CD14-positive monocyte (primary cell): ENCODE measurements at regions of chr4 and their contacts with region 1.

Region 1: DNA sequence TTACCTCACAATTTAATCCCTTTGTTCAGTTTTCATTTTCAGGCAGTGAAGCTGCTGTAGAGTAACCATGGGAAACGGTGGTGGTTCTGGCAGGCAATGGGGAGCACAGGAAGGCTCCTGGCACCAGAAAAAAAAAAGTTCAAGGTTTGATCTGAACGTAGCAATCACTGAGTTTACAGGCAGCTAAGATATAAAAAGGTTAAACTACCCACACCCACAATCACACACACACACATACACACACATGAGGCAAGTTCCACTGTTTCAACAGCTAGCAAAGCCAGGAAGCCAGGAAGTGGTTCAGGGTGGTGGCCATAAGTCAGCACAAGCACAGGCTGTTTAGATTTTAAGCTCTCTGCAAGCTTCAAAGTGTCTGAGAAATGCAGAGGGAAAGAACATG is at the start of gene SULT1B1:
- DNase-seq: peak; percentile 45 to 60 (median 54)
- H3K4me3 ChIP-seq: peak within 1 kb of the TSS; percentile 33 to 74 (median 68)
- H3K4me3 Mint-ChIP-seq: peak within 1 kb of the TSS; percentile 79 to 97
- H3K27ac ChIP-seq: peak within 1 kb of the TSS; percentile 79 to 87
- H3K27ac Mint-ChIP-seq: peak within 1 kb of the TSS; percentile 90 to 98 (median 96)
- H3K4me1 ChIP-seq: peaks cover 34 to 50% of the 10 kb centered on the region in 2 donors
- H3K4me1 Mint-ChIP-seq: peaks cover 53% of the 10 kb centered on the region
- H3K27me3 ChIP-seq: no peaks in the 10 kb centered on the region
- H3K27me3 Mint-ChIP-seq: no peaks in the 10 kb centered on the region
- CTCF ChIP-seq: no peak
- polyA plus RNA-seq, gene SULT1B1: 3.4 to 15.6 (median 11.2) TPM

Region 2: GRCh38 chr4:69823481-69824186 is 63.2 kb after region 1 on chr4:
- intact Hi-C with region 1: loop called in 1 of 2 experiments (anchors 10 kb)
- DNase-seq: peak; percentile 26 to 44 (median 36)
- H3K4me3 ChIP-seq: no peak overlapping the region
- H3K4me3 Mint-ChIP-seq: no peak overlapping the region
- H3K27ac ChIP-seq: no peak overlapping the region
- H3K27ac Mint-ChIP-seq: peak overlapping the region in 1 of 7 donors; percentile 1
- H3K4me1 ChIP-seq: peaks cover 0 to 4% of the 10 kb centered on the region in 2 donors
- H3K4me1 Mint-ChIP-seq: peaks cover 18% of the 10 kb centered on the region
- H3K27me3 ChIP-seq: no peaks in the 10 kb centered on the region
- H3K27me3 Mint-ChIP-seq: peaks cover 0 to 6% (median 2%) of the 10 kb centered on the region in 3 donors
- CTCF ChIP-seq: peak; percentile 67

Region 3: GRCh38 chr4:70704331-70705145 is 944.1 kb after region 1 on chr4:
- intact Hi-C with region 1: no loop called
- DNase-seq: peak; percentile 53 to 79 (median 70)
- H3K4me3 ChIP-seq: peak overlapping the region; percentile 62 to 81 (median 66)
- H3K4me3 Mint-ChIP-seq: peak overlapping the region; percentile 89 to 92
- H3K27ac ChIP-seq: peak overlapping the region; percentile 12 to 80
- H3K27ac Mint-ChIP-seq: peak overlapping the region; percentile 74 to 91 (median 83)
- H3K4me1 ChIP-seq: peaks cover 17 to 30% of the 10 kb centered on the region in 2 donors
- H3K4me1 Mint-ChIP-seq: peaks cover 29% of the 10 kb centered on the region
- H3K27me3 ChIP-seq: no peaks in the 10 kb centered on the region
- H3K27me3 Mint-ChIP-seq: no peaks in the 10 kb centered on the region
- CTCF ChIP-seq: peak; percentile 42